B cell (primary cell): ENCODE measurements at regions of chr3 and their contacts with region 1.

Region 1: GRCh38 chr3:13419505-13420044 is 547 bp downstream of the NUP210 start:
- DNase-seq: no peak
- ATAC-seq: peak; percentile 56
- H3K4me3 ChIP-seq: peak overlapping the region; percentile 24 to 82 (median 70)
- H3K4me3 Mint-ChIP-seq: peak overlapping the region; percentile 93
- H3K27ac ChIP-seq: peak overlapping the region; percentile 63 to 91
- H3K27ac Mint-ChIP-seq: peak overlapping the region; percentile 94
- H3K4me1 ChIP-seq: peaks cover 59 to 61% of the 10 kb centered on the region in 2 donors
- H3K4me1 Mint-ChIP-seq: peaks cover 64% of the 10 kb centered on the region
- H3K27me3 ChIP-seq: no peaks in the 10 kb centered on the region
- H3K27me3 Mint-ChIP-seq: no peaks in the 10 kb centered on the region
- CTCF ChIP-seq: peak; percentile 10

Region 2: GRCh38 chr3:13391308-13391707 is 28.3 kb before region 1 on chr3:
- CTCF ChIA-PET with region 1: interaction called, 25 read pairs
- POLR2A ChIA-PET with region 1: no interaction called
- intact Hi-C with region 1: no loop called
- DNase-seq: peak; percentile 42
- ATAC-seq: no peak
- H3K4me3 ChIP-seq: no peak overlapping the region
- H3K4me3 Mint-ChIP-seq: no peak overlapping the region
- H3K27ac ChIP-seq: no peak overlapping the region
- H3K27ac Mint-ChIP-seq: no peak overlapping the region
- H3K4me1 ChIP-seq: no peaks in the 10 kb centered on the region
- H3K4me1 Mint-ChIP-seq: peaks cover under 1% of the 10 kb centered on the region
- H3K27me3 ChIP-seq: no peaks in the 10 kb centered on the region
- H3K27me3 Mint-ChIP-seq: no peaks in the 10 kb centered on the region
- CTCF ChIP-seq: peak; percentile 43